ENCODE measurements at regions of chr6 and their contacts with region 1.

Region 1: DNA sequence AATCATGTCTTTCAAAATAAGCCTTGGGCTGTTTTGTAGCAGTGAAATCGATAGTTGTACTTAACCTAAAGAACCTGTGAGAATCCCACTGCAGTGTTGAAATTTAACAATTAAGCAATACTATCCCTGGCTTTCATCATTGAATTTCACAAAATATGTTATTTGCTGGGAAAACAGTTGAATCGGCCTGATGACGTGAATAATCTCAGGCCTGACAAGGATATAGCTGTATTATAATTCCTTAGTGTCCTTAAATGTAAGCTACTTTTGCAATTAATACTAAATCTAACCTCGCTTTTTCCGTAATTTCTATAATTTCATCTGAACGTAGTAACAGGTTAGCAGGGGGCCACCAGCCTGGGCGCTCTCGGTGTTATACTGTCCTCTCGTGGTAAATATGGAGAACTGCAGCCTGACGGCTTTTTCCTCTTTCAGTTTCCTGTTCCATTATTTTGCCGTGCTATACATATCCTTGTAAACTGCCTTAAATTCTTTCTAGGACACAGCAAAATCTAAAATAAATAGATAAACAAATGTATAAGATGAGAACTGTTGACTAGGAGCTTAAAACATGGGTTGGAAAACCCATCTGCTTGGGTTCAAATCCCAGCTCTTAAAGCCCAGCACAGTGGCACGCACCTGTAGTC is 24.0 kb downstream of the MTFR2 start:
- DNase-seq: peak; percentile 59
- ATAC-seq: peak; percentile 82
- H3K4me3 ChIP-seq: peak overlapping the region; percentile 53 to 60 (median 59)
- H3K27ac ChIP-seq: no peak overlapping the region
- H3K4me1 ChIP-seq: peaks cover 29% of the 10 kb centered on the region
- H3K27me3 ChIP-seq: no peaks in the 10 kb centered on the region; a peak in 2 of 5 replicates
- CTCF ChIP-seq: peak; percentile 95
- EP300 ChIP-seq: no peak
- POLR2A ChIP-seq: no peak
- RAD21 ChIP-seq: peak; percentile 96

Region 2: GRCh38 chr6:135451693-135452092 is 774.5 kb before region 1 on chr6:
- CTCF ChIA-PET with region 1: interaction called, 16 read pairs
- POLR2A ChIA-PET with region 1: no interaction called
- in situ Hi-C with region 1: loop called (anchors 5 kb)
- intact Hi-C with region 1: loop called (anchors 1 kb)
- DNase-seq: peak; percentile 32
- ATAC-seq: no peak
- H3K4me3 ChIP-seq: no peak overlapping the region
- H3K27ac ChIP-seq: no peak overlapping the region
- H3K4me1 ChIP-seq: no peaks in the 10 kb centered on the region
- H3K27me3 ChIP-seq: no peaks in the 10 kb centered on the region
- CTCF ChIP-seq: peak; percentile 59
- EP300 ChIP-seq: no peak
- POLR2A ChIP-seq: no peak
- RAD21 ChIP-seq: no peak

Region 3: GRCh38 chr6:135535989-135536414 is 690.1 kb before region 1 on chr6:
- CTCF ChIA-PET with region 1: interaction called, 16 read pairs
- POLR2A ChIA-PET with region 1: interaction called, 3 read pairs
- in situ Hi-C with region 1: loop called (anchors 5 kb)
- intact Hi-C with region 1: loop called (anchors 1 kb)
- DNase-seq: peak; percentile 40
- ATAC-seq: peak; percentile 71
- H3K4me3 ChIP-seq: no peak overlapping the region
- H3K27ac ChIP-seq: no peak overlapping the region
- H3K4me1 ChIP-seq: no peaks in the 10 kb centered on the region
- H3K27me3 ChIP-seq: no peaks in the 10 kb centered on the region; a peak in 1 of 5 replicates
- CTCF ChIP-seq: peak; percentile 65
- EP300 ChIP-seq: no peak
- POLR2A ChIP-seq: no peak
- RAD21 ChIP-seq: peak; percentile 52; the same call in 1 of the 2 replicates

Region 4: GRCh38 chr6:135759831-135760230 is 466.3 kb before region 1 on chr6:
- CTCF ChIA-PET with region 1: no interaction called
- POLR2A ChIA-PET with region 1: no interaction called
- in situ Hi-C with region 1: no loop called
- intact Hi-C with region 1: loop called (anchors 1 kb)
- DNase-seq: peak; percentile 24
- ATAC-seq: peak; percentile 83
- H3K4me3 ChIP-seq: no peak overlapping the region
- H3K27ac ChIP-seq: no peak overlapping the region
- H3K4me1 ChIP-seq: no peaks in the 10 kb centered on the region
- H3K27me3 ChIP-seq: no peaks in the 10 kb centered on the region
- CTCF ChIP-seq: peak; percentile 47
- EP300 ChIP-seq: no peak
- POLR2A ChIP-seq: no peak
- RAD21 ChIP-seq: 0 out of 2 replicates have a peak, but pooled peaks have one; percentile 15

Region 5: DNA sequence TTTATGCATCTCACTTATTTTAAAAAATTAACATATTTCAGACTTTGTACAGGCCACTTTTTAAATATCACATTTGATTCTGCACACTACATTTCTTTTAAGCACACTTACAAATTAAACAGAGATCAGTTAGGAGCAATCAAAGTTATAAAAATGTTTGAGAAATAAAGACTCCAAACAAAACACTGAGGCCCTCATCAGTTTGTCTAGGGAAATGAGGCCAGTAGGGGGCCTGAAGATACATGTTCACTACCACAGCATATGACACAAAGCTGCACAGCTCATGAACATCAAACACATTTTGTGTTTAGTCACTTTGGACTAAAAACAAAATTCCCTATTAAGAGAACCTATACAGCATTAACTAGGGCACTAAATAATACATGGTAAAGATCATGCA is 194.2 kb before region 1 on chr6:
- CTCF ChIA-PET with region 1: interaction called, 7 read pairs
- POLR2A ChIA-PET with region 1: no interaction called
- in situ Hi-C with region 1: no loop called
- intact Hi-C with region 1: loop called (anchors 1 kb)
- DNase-seq: peak; percentile 15
- ATAC-seq: peak; percentile 79
- H3K4me3 ChIP-seq: no peak overlapping the region
- H3K27ac ChIP-seq: no peak overlapping the region
- H3K4me1 ChIP-seq: no peaks in the 10 kb centered on the region
- H3K27me3 ChIP-seq: peaks cover 0 to 4% of the 10 kb centered on the region in 2 experiments; a peak in 1 of 5 replicates
- CTCF ChIP-seq: peak; percentile 26; the same call in 1 of the 2 replicates
- EP300 ChIP-seq: no peak
- POLR2A ChIP-seq: no peak
- RAD21 ChIP-seq: no peak

Region 6: DNA sequence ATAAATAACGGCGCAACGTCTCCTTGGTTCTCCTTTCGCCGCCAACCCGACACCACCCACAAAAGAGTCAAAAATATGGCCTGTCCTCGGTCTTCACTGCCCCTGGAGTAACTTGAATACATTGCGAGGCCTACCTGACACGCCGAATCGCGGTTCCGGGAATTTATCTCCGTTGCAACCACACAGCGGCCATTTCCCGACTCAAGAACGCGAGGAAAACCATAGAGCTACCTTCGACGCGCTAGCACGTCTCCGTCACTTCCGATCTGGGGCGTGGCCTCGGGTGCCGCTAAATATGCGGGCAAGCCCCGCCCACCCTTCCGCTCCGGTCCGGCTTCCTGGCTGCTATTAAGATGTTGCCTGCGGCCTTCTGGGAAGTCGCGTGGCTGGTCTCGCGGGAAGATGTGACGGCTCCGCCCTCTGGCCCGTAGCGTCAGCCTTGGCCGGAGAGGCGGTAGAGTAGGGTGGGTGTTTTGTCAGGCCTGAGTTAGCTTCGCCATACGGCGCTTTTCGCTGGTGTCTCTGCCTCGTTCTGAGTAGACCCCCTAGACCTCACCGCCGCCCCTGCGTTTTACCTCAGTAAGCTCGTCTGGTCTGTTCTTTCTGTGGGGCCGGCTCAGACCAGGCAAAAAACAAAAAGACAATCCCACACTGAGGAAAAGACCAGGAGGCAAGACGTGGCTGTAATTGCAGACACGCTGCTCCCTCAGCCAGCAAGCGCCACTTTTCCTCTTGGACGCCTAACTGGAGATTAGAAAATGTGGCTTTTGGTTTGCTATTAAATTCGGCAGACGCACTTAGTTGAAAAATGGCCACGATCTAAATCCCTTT is 63.6 kb after region 1 on chr6 and contains the start of gene BCLAF1:
- CTCF ChIA-PET with region 1: no interaction called
- POLR2A ChIA-PET with region 1: interaction called, 74 read pairs
- in situ Hi-C with region 1: no loop called
- intact Hi-C with region 1: no loop called
- DNase-seq: peak; percentile 99
- ATAC-seq: peak; percentile 94
- H3K4me3 ChIP-seq: peak within 1 kb of the TSS; percentile 82 to 95 (median 93)
- H3K27ac ChIP-seq: peak within 1 kb of the TSS; percentile 99
- H3K4me1 ChIP-seq: peaks cover 40% of the 10 kb centered on the region
- H3K27me3 ChIP-seq: no peaks in the 10 kb centered on the region; a peak in 1 of 5 replicates
- CTCF ChIP-seq: no peak
- EP300 ChIP-seq: peak in 1 of 2 experiments; percentile 45; a peak in 1 of 4 replicates
- POLR2A ChIP-seq: peak; percentile 98 to 99
- RAD21 ChIP-seq: peak; percentile 47; the same call in 1 of the 2 replicates
- total RNA-seq, gene BCLAF1: 292 and 439 TPM in 2 replicates